ENCODE measurements at regions of chr21 and their contacts with region 1.

Region 1: DNA sequence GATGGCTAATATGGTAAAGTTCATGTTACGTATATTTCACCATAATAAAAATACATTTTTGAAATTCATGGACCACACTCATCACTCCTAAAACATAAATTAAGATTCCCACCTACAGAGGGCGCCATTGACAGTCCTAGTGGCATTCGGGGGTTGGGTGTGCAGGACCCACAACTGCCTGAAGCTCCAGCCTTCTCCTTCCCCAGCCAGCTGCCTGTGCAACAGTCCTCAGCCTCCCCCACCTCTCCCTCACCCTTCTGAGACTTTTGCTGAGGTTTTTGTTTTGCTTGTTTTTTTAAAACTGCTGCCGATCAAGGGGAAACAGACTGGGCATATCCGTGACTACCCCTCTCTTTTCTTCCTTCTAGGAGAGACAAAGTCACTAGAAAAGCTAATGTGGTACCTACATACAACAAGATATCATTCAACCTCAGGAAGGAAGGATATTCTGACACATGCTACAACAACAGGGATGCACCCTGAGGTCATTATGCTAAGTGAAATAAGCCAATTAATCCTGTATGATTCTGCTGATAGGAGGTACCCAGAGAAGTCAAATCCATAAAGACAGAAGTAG is 9.2 kb upstream of the EVA1C start:
- DNase-seq: peak; percentile 86
- H3K4me3 ChIP-seq: no peak overlapping the region
- H3K27ac ChIP-seq: peak overlapping the region; percentile 22
- H3K4me1 ChIP-seq: peaks cover 16% of the 10 kb centered on the region
- H3K27me3 ChIP-seq: no peaks in the 10 kb centered on the region
- CTCF ChIP-seq: peak; percentile 63 to 66
- POLR2A ChIP-seq: no peak

Region 2: DNA sequence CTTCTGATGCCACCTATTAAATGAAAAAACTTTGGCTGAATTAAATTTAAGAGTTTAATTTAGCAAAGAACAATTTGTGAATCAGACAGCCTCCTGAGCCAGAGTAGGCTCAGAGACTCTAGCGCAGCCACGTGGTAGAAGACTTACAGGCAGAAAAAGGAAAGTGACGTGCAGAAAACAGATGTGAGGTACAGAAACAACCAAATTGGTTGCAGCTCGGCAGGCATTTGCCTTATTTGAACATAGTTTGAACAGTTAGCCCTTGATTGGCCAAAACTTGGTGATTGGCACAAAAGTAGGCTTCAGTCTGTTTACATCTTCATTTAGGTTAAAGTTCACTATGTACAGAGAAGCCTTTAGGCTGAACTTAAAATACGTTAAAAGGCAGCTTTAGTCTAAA is 159.1 kb after region 1 on chr21:
- CTCF ChIA-PET with region 1: interaction called, 62 read pairs
- POLR2A ChIA-PET with region 1: no interaction called
- dilution Hi-C with region 1: no loop called
- intact Hi-C with region 1: loop called (anchors 1 kb)
- DNase-seq: peak; percentile 84
- H3K4me3 ChIP-seq: no peak overlapping the region
- H3K27ac ChIP-seq: peak overlapping the region; percentile 22
- H3K4me1 ChIP-seq: peaks cover 6% of the 10 kb centered on the region
- H3K27me3 ChIP-seq: no peaks in the 10 kb centered on the region
- CTCF ChIP-seq: peak; percentile 48 to 61
- POLR2A ChIP-seq: no peak

Region 3: DNA sequence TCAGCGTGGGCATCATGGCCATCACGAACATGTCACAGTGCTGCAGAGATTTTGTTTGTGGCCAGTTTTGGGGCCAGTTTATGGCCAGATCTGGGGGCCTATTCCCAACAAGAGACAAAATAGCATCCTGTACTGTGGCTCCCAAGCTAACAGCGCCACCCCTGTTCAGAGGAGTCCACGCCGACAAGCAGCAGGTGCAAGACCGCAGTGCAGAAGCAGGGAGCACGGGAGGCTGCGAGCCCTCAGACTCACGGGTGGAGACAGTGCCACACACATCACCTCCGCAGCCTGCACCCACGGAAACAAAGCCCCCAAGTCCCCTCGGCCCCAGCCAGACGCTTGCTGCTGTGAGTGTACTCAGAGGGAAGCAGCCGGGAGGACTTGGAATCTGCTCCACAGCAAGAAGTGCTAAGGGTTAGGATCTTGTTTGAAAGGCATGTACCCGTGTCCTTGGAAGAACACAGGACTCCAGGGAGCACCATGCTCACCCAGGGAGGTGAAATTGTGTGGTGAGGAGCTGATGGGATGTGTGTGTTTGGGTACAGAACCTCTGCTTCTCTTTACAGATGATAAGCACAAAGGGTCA is 174.9 kb after region 1 on chr21:
- CTCF ChIA-PET with region 1: interaction called, 70 read pairs
- POLR2A ChIA-PET with region 1: no interaction called
- dilution Hi-C with region 1: no loop called
- intact Hi-C with region 1: no loop called
- DNase-seq: peak; percentile 22
- H3K4me3 ChIP-seq: no peak overlapping the region
- H3K27ac ChIP-seq: no peak overlapping the region
- H3K4me1 ChIP-seq: no peaks in the 10 kb centered on the region
- H3K27me3 ChIP-seq: peaks cover 3 to 13% of the 10 kb centered on the region in 2 experiments
- CTCF ChIP-seq: peak; percentile 29 to 56
- POLR2A ChIP-seq: no peak

Region 4: DNA sequence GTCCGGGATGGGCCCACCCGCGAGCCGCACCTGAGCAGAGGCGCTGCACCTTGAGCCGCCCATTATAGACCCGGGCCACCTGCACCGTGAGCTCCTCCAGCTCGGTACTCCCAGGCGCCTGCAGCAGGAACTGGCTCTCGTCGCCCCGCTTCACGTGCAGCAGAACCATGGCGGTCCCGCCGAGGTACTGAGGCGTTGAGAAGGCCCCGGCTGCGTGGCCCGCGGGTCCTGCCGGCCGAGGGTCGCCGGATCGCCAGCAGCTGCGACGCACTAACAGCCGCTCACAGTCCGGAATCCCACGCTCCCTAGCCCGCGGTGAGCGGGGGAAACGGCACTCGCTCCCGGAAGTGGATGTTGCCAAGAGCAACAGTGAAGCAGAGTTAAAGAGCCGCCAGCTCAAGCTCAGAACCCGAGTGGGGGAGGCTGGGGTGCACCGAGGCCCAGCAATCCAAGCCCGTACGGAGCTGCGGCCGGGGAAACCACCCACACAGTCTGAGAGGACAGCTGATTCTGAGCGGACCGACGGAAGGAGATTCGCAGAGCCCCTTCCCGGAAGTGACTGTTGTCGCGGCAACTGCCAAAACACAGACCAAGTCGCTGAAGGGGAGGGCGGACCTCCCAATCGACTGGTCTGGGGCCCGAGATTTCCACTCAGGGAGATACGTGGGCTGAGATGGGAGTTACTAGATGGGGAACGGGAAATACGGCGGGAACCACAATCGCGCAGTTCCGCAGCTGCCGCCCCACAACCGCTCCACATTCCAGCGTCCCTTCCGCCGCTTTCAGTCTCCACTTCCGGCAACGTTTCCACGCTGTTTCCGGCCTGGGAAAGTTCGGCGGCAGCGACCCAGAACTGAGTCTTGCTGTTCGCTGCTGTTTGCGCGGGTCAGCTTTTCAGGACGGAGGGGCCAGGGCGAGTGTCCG is 209.0 kb after region 1 on chr21 and contains the start of gene CFAP298:
- CTCF ChIA-PET with region 1: interaction called, 11 read pairs
- POLR2A ChIA-PET with region 1: no interaction called
- dilution Hi-C with region 1: no loop called
- intact Hi-C with region 1: no loop called
- DNase-seq: peak; percentile 92
- H3K4me3 ChIP-seq: peak within 1 kb of the TSS; percentile 74 to 99 (median 95)
- H3K27ac ChIP-seq: peak within 1 kb of the TSS; percentile 79
- H3K4me1 ChIP-seq: peaks cover 10% of the 10 kb centered on the region
- H3K27me3 ChIP-seq: no peaks in the 10 kb centered on the region
- CTCF ChIP-seq: no peak
- POLR2A ChIP-seq: peak; percentile 91
- total RNA-seq, gene CFAP298: 36.0 and 44.1 TPM in 2 replicates

Measured in endothelial cell of umbilical vein (primary cell).